ENCODE measurements at regions of chr3 and their contacts with region 1.

Region 1: GRCh38 chr3:161423911-161424522 is 52.7 kb upstream of the SPTSSB start:
- DNase-seq: peak; percentile 64
- H3K4me3 Mint-ChIP-seq: no peak overlapping the region
- H3K27ac Mint-ChIP-seq: no peak overlapping the region
- H3K4me1 Mint-ChIP-seq: peaks cover 8% of the 10 kb centered on the region
- H3K27me3 Mint-ChIP-seq: no peaks in the 10 kb centered on the region
- CTCF ChIP-seq: peak; percentile 44

Region 2: GRCh38 chr3:160565442-160566403 is 858.3 kb before region 1 on chr3 and contains the start of gene KPNA4:
- CTCF ChIA-PET with region 1: no interaction called
- POLR2A ChIA-PET with region 1: no interaction called
- intact Hi-C with region 1: loop called (anchors 5 kb)
- DNase-seq: peak; percentile 98
- H3K4me3 Mint-ChIP-seq: peak within 1 kb of the TSS; percentile 96
- H3K27ac Mint-ChIP-seq: peak within 1 kb of the TSS; percentile 99
- H3K4me1 Mint-ChIP-seq: peaks cover 30% of the 10 kb centered on the region
- H3K27me3 Mint-ChIP-seq: no peaks in the 10 kb centered on the region
- CTCF ChIP-seq: no peak
- total RNA-seq, gene KPNA4: 85.9 and 127 TPM in 2 replicates

Region 3: GRCh38 chr3:160707187-160707794 is 716.7 kb before region 1 on chr3:
- CTCF ChIA-PET with region 1: interaction called, 7 read pairs
- POLR2A ChIA-PET with region 1: no interaction called
- intact Hi-C with region 1: loop called (anchors 1 kb)
- DNase-seq: peak; percentile 65
- H3K4me3 Mint-ChIP-seq: no peak overlapping the region
- H3K27ac Mint-ChIP-seq: no peak overlapping the region
- H3K4me1 Mint-ChIP-seq: no peaks in the 10 kb centered on the region
- H3K27me3 Mint-ChIP-seq: peaks cover 20% of the 10 kb centered on the region
- CTCF ChIP-seq: peak; percentile 54

Region 4: DNA sequence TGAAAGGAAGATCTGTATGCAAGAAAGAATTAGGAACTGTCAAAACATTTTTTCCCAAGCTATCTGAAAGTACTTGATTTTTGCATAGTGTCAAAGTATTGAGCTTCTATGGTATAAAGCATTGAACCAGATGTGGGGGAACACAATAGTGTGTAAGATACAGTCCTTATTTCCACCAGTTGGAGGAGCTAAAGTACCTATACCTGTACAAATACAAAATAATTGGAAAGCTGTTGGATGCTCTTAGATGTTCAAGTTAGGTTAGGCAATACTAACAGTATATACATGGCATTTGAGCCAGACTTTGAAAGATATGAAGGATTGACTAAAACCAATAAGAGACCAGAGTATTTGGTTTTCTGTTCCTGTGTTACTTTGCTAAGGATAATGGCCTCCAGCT is 467.2 kb before region 1 on chr3:
- CTCF ChIA-PET with region 1: no interaction called
- POLR2A ChIA-PET with region 1: no interaction called
- intact Hi-C with region 1: loop called (anchors 5 kb)
- DNase-seq: peak; percentile 30
- H3K4me3 Mint-ChIP-seq: no peak overlapping the region
- H3K27ac Mint-ChIP-seq: no peak overlapping the region
- H3K4me1 Mint-ChIP-seq: no peaks in the 10 kb centered on the region
- H3K27me3 Mint-ChIP-seq: no peaks in the 10 kb centered on the region
- CTCF ChIP-seq: peak; percentile 29

Region 5: GRCh38 chr3:161409069-161409468 is 14.9 kb before region 1 on chr3:
- CTCF ChIA-PET with region 1: interaction called, 13 read pairs
- POLR2A ChIA-PET with region 1: no interaction called
- intact Hi-C with region 1: no loop called
- DNase-seq: peak; percentile 76
- H3K4me3 Mint-ChIP-seq: no peak overlapping the region
- H3K27ac Mint-ChIP-seq: no peak overlapping the region
- H3K4me1 Mint-ChIP-seq: peaks cover 16% of the 10 kb centered on the region
- H3K27me3 Mint-ChIP-seq: no peaks in the 10 kb centered on the region
- CTCF ChIP-seq: peak; percentile 69

Measured in MCF 10A (cell line).